CD8-positive, alpha-beta T cell (primary cell): ENCODE measurements at regions of chr7 and their contacts with region 1.

Region 1: GRCh38 chr7:100604028-100604975 is 2.1 kb downstream of the PCOLCE start:
- DNase-seq: peak; percentile 45 to 87 (median 77)
- ATAC-seq: peak; percentile 76
- H3K4me3 ChIP-seq: peak overlapping the region; percentile 62 to 79
- H3K4me3 Mint-ChIP-seq: peak overlapping the region; percentile 85
- H3K27ac ChIP-seq: peak overlapping the region; percentile 53 to 70
- H3K27ac Mint-ChIP-seq: peak overlapping the region; percentile 87
- H3K4me1 ChIP-seq: peaks cover 19% of the 10 kb centered on the region
- H3K4me1 Mint-ChIP-seq: peaks cover 22% of the 10 kb centered on the region
- H3K27me3 ChIP-seq: peaks cover 0 to 3% of the 10 kb centered on the region in 2 experiments
- H3K27me3 Mint-ChIP-seq: no peaks in the 10 kb centered on the region
- CTCF ChIP-seq: peak; percentile 50

Region 2: DNA sequence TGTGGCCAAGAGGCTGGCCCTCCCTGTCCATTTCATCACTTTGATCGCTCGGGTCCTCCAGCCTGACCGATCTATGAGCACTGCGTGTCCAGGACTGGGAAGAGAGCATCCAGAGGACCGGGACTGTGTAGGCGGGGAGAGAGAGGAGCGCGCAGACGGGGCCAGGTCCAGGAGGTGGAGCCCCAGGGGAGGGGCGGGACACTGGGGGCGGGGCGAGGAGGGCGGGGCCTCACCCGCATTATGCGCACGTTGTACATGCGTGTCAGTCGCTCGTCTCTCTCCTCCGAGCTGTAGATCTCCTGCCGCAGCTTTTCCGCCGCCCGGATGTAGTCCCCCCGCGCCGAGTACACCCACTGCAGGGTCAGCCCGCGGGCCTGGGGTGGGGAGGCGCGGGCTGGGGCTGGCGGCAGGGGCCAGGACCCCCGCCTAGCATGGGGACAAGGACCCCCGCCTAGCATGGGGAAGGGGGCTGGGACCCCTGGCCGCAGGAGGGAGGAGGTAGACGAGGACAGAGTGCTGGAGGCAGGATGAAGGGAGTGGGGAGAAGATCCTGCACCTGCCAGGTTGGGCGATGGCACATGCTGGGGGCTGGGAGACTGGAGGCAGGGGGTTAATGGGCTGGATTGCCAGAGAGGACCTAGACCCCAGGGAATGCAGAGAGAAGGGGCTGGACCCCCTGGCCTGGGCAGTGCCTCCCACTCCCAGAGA is 22.4 kb after region 1 on chr7:
- CTCF ChIA-PET with region 1: interaction called, 5 read pairs
- POLR2A ChIA-PET with region 1: no interaction called
- intact Hi-C with region 1: loop called (anchors 1 to 2 kb)
- DNase-seq: peak; percentile 82 to 94 (median 88)
- ATAC-seq: peak; percentile 99
- H3K4me3 ChIP-seq: peak overlapping the region; percentile 40 to 45
- H3K4me3 Mint-ChIP-seq: peak overlapping the region; percentile 70
- H3K27ac ChIP-seq: peak overlapping the region; percentile 56 to 78
- H3K27ac Mint-ChIP-seq: peak overlapping the region; percentile 80
- H3K4me1 ChIP-seq: peaks cover 14% of the 10 kb centered on the region
- H3K4me1 Mint-ChIP-seq: peaks cover 35% of the 10 kb centered on the region
- H3K27me3 ChIP-seq: no peaks in the 10 kb centered on the region
- H3K27me3 Mint-ChIP-seq: no peaks in the 10 kb centered on the region
- CTCF ChIP-seq: no peak

Region 3: GRCh38 chr7:100655908-100656674 is 51.8 kb after region 1 on chr7 and contains the start of gene ACTL6B:
- CTCF ChIA-PET with region 1: no interaction called
- POLR2A ChIA-PET with region 1: no interaction called
- intact Hi-C with region 1: no loop called
- DNase-seq: peak in 7 of 9 experiments; percentile 38 to 62 (median 57)
- ATAC-seq: peak; percentile 83
- H3K4me3 ChIP-seq: no peak within 1 kb of the TSS
- H3K4me3 Mint-ChIP-seq: no peak within 1 kb of the TSS
- H3K27ac ChIP-seq: no peak within 1 kb of the TSS
- H3K27ac Mint-ChIP-seq: no peak within 1 kb of the TSS
- H3K4me1 ChIP-seq: peaks cover 8% of the 10 kb centered on the region
- H3K4me1 Mint-ChIP-seq: no peaks in the 10 kb centered on the region
- H3K27me3 ChIP-seq: peaks cover 24 to 40% of the 10 kb centered on the region in 2 experiments
- H3K27me3 Mint-ChIP-seq: peaks cover 34% of the 10 kb centered on the region
- CTCF ChIP-seq: no peak
- total RNA-seq, gene ACTL6B: not detected

Region 4: GRCh38 chr7:100726996-100727761 is 122.9 kb after region 1 on chr7:
- CTCF ChIA-PET with region 1: interaction called, 3 read pairs
- POLR2A ChIA-PET with region 1: no interaction called
- intact Hi-C with region 1: loop called in 1 of 2 experiments (anchors 1 kb)
- DNase-seq: no peak
- ATAC-seq: no peak
- H3K4me3 ChIP-seq: no peak overlapping the region
- H3K4me3 Mint-ChIP-seq: no peak overlapping the region
- H3K27ac ChIP-seq: no peak overlapping the region
- H3K27ac Mint-ChIP-seq: no peak overlapping the region
- H3K4me1 ChIP-seq: no peaks in the 10 kb centered on the region
- H3K4me1 Mint-ChIP-seq: peaks cover 3% of the 10 kb centered on the region
- H3K27me3 ChIP-seq: peaks cover 0 to 4% of the 10 kb centered on the region in 2 experiments
- H3K27me3 Mint-ChIP-seq: peaks cover 28% of the 10 kb centered on the region
- CTCF ChIP-seq: no peak